ENCODE measurements at regions of chr1 and their contacts with region 1.

Region 1: DNA sequence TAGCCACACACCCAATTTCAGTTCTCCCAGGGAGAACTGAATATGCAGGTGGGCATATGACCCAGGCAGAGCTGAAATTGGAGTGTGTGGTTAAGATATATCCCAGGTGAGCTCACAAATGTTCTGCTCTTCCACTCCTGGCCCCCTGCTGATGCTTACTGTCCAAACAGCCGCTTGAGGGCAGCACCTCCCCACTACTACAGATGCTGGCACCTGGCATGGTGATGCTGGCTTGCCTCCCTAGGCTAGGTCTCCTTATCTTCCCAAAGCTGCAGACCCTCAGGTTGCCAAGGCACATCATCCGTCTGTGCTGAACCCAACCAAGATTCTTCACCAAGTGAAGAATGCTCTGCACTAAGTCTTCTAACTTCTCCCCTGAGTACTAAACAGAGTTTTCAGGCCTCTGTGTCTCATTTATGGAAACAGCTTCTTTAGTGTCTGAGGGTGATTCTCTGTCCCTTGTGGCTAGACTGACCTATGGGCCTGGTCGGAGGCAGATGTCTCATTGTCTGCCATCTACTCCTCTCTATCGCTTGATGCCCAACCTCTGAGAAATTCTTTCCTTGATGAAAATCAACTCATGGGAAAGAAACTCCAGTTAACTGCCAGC is 27.2 kb downstream of the XCL1 start:
- DNase-seq: peak; percentile 84
- ATAC-seq: peak; percentile 78
- H3K4me3 Mint-ChIP-seq: no peak overlapping the region
- H3K27ac Mint-ChIP-seq: no peak overlapping the region
- H3K4me1 Mint-ChIP-seq: no peaks in the 10 kb centered on the region
- H3K27me3 Mint-ChIP-seq: no peaks in the 10 kb centered on the region

Region 2: DNA sequence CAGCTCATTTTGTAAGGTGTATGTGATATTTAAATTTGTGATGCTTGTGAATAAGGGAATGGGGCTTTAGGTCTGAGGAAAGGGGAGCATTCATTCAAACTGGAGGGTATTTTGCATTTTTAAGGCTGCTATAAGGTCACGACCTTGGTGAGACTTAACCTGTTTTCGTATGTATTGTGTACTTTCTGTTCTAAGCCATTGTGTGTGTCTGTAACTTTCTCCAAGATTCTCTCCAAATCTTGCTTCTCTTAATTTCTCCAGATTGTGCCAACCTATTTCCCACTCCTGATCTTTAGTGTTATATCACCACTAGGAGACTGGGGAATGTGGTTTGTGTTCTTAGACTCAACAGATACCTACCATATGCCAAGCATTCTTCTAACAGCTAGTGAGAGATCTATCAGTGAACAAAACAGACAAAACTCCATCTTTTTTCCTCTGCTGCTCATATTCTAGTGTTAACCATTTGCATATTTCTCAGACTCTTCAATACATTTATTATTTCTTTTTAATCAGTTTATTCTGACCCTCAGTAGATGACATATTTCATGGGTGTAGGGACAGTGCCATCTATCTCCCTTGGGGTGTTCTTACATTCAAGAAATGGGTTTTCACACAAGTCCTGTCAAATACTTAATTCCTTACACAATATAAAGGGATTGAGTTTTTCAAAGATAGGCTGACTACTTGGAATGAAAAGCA is 530.3 kb after region 1 on chr1:
- CTCF ChIA-PET with region 1: interaction called, 3 read pairs
- POLR2A ChIA-PET with region 1: no interaction called
- intact Hi-C with region 1: loop called in 1 of 2 experiments (anchors 10 kb)
- DNase-seq: no peak
- ATAC-seq: no peak
- H3K4me3 Mint-ChIP-seq: no peak overlapping the region
- H3K27ac Mint-ChIP-seq: no peak overlapping the region
- H3K4me1 Mint-ChIP-seq: peaks cover 13% of the 10 kb centered on the region
- H3K27me3 Mint-ChIP-seq: no peaks in the 10 kb centered on the region